Activated CD8-positive, alpha-beta T cell treated with anti-CD3 and anti-CD28 coated beads for 36 hours (primary cell): ENCODE measurements at regions of chr15 and their contacts with region 1.

Region 1: DNA sequence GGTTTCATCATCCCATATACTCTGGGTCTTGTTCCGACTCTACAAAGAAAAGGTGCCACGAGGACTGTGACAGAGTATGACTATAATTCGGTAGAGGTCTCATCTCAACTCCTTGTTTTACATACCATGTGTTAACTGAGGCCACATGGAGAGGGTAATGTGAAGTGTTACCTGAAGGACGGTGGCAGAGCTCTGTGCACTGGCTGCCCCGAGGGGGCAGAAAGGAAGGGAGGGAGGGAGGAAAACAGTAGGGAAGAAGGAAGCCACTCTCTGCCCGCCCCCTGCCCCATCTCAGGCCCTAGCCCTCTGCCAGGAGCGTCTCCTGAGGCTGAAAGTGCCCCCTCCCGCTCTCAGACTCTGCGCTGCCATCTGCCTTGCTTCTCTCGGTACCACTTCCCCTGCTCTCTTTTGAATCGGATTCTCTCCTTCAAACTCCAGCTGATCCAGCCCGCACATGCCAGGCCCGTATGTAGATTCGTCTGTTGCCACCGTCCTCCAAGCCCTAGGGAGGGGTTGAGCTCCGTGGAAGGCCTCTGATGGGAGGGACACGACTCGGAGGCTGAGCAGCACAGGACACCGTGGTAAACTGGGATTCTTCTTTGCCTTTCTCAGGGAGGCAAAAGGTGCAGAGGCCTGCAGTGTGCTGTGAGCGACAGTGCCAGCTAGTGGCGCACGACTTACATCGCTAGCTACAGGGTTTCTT is 70.5 kb upstream of the ATP10A start:
- DNase-seq: peak; percentile 83
- ATAC-seq: peak; percentile 98
- H3K4me3 Mint-ChIP-seq: peak overlapping the region; percentile 81
- H3K27ac Mint-ChIP-seq: peak overlapping the region; percentile 79
- H3K4me1 Mint-ChIP-seq: peaks cover 6% of the 10 kb centered on the region
- H3K27me3 Mint-ChIP-seq: peaks cover 2% of the 10 kb centered on the region
- CTCF ChIP-seq: peak; percentile 79

Region 2: DNA sequence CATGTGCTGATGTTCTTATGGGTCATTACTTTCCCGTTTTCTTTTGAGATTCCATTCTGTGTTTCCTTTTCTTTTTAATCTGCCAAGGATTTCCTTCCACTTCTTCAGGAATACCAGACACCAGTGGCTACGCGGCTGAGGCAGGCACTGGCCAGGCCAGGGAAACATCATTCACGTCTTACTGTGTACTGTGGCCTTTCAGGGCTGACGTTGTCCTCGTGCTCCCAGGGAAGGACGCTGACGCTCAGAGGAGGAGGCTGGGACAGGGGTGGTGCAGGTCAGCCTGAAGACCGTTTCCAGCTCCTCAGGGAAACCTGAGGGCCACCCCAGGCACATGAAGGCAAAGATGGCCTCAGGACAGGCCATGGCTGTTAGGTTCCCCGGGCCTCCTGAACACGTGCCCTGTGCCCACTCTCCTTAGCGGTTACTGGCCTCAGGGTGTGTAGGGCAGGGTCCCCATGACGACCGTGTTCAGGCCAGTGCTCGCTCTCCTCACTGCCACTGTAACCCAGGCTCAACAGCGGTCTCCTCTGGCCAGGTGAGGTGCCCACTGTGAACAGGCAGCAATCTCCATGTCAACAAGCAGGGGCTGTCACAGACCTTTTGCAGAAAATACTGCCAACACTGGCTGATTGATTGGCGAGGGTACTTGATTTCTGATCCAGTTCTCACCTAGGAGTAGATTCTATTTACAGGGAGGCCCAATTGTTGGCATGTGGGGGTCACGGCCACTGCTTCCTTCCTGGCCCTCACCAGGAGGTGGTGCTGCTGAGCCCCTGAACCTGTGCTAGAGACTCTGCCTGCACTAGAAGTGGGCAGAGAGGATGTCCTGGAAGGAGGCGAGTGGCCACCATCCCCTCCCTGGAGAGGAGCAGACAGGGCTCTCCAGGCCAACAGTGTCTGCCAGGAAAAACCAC is 240.0 kb before region 1 on chr15:
- CTCF ChIA-PET with region 1: interaction called, 8 read pairs
- POLR2A ChIA-PET with region 1: no interaction called
- intact Hi-C with region 1: loop called (anchors 1 kb)
- DNase-seq: peak; percentile 40
- ATAC-seq: peak; percentile 74
- H3K4me3 Mint-ChIP-seq: no peak overlapping the region
- H3K27ac Mint-ChIP-seq: no peak overlapping the region
- H3K4me1 Mint-ChIP-seq: no peaks in the 10 kb centered on the region
- H3K27me3 Mint-ChIP-seq: no peaks in the 10 kb centered on the region
- CTCF ChIP-seq: peak; percentile 73

Region 3: GRCh38 chr15:25739687-25740121 is 193.9 kb before region 1 on chr15:
- CTCF ChIA-PET with region 1: interaction called, 10 read pairs
- POLR2A ChIA-PET with region 1: interaction called, 3 read pairs
- intact Hi-C with region 1: loop called (anchors 10 kb)
- DNase-seq: peak; percentile 61
- ATAC-seq: peak; percentile 87
- H3K4me3 Mint-ChIP-seq: no peak overlapping the region
- H3K27ac Mint-ChIP-seq: no peak overlapping the region
- H3K4me1 Mint-ChIP-seq: peaks cover 15% of the 10 kb centered on the region
- H3K27me3 Mint-ChIP-seq: no peaks in the 10 kb centered on the region
- CTCF ChIP-seq: peak; percentile 26

Region 4: DNA sequence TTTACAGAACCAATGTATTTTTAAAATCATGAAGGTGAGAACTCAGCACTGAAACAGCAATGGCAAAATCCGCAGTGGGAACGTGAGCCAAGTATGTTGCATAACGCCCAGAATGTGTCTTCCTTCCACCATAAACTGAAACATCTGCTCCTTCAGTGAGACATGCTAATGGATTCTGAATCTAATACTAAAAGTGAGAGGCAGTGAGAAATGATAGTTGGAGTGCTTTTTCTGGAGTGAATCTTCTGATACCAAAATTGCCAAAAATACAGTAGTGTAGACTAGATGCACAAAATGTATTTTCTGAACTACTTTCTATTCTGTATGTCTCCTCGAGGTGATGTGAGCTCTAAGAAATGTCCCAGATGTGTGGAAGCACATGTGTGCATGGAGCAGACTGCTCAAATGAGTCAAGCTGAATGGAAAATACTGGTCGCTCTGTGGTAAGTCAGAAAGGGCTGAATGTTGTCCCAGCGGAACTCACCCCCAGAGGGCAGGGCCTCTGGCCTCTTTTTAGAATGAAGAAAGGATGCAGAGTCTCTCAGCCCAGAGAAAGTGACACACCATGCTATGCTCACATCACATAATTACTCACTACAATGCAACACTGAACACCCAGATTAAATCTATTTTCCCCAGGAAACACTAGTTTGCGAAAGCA is 143.5 kb before region 1 on chr15:
- CTCF ChIA-PET with region 1: interaction called, 5 read pairs
- POLR2A ChIA-PET with region 1: no interaction called
- intact Hi-C with region 1: loop called (anchors 5 kb)
- DNase-seq: peak; percentile 80
- ATAC-seq: peak; percentile 97
- H3K4me3 Mint-ChIP-seq: no peak overlapping the region
- H3K27ac Mint-ChIP-seq: peak overlapping the region; percentile 33
- H3K4me1 Mint-ChIP-seq: peaks cover 54% of the 10 kb centered on the region
- H3K27me3 Mint-ChIP-seq: no peaks in the 10 kb centered on the region
- CTCF ChIP-seq: no peak

Region 5: DNA sequence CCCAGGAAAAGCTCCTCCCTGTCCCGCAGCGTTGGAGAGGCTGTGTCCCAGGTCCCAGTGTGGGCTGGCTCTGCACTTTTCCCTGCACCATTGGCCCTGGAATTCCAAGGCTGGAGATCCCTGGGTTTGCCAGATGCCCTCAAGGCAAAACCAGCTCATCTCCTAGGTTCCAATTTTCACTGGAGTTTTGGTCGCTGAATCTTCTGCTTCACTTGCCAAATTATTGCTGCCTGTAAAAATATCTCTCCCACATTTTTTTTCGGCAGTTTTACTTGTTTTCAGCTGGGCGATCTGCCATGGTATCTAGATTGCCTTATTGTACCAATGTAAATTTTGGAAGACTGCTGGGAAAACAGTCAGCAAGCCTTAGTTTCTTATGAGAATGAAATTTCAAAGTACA is 80.4 kb after region 1 on chr15:
- CTCF ChIA-PET with region 1: no interaction called
- POLR2A ChIA-PET with region 1: no interaction called
- intact Hi-C with region 1: no loop called
- DNase-seq: no peak
- ATAC-seq: no peak
- H3K4me3 Mint-ChIP-seq: no peak overlapping the region
- H3K27ac Mint-ChIP-seq: no peak overlapping the region
- H3K4me1 Mint-ChIP-seq: no peaks in the 10 kb centered on the region
- H3K27me3 Mint-ChIP-seq: peaks cover 5% of the 10 kb centered on the region
- CTCF ChIP-seq: no peak